ENCODE measurements at regions of chr11 and their contacts with region 1.

Region 1: GRCh38 chr11:6757373-6757967 is 14.3 kb downstream of the OR2AG2 start:
- DNase-seq: peak; percentile 75
- ATAC-seq: peak; percentile 67
- H3K4me3 ChIP-seq: no peak overlapping the region
- H3K4me3 Mint-ChIP-seq: no peak overlapping the region
- H3K27ac ChIP-seq: no peak overlapping the region
- H3K27ac Mint-ChIP-seq: no peak overlapping the region
- H3K4me1 ChIP-seq: no peaks in the 10 kb centered on the region
- H3K4me1 Mint-ChIP-seq: peaks cover 2% of the 10 kb centered on the region
- H3K27me3 ChIP-seq: peaks cover 0 to 5% (median 0%) of the 10 kb centered on the region in 4 experiments
- H3K27me3 Mint-ChIP-seq: peaks cover 9% of the 10 kb centered on the region
- CTCF ChIP-seq: peak; percentile 77

Region 2: GRCh38 chr11:6531267-6531752 is 226.2 kb before region 1 on chr11:
- CTCF ChIA-PET with region 1: interaction called, 22 read pairs
- POLR2A ChIA-PET with region 1: no interaction called
- intact Hi-C with region 1: loop called (anchors 1 kb)
- DNase-seq: peak; percentile 66
- ATAC-seq: peak; percentile 57
- H3K4me3 ChIP-seq: no peak overlapping the region
- H3K4me3 Mint-ChIP-seq: no peak overlapping the region
- H3K27ac ChIP-seq: no peak overlapping the region
- H3K27ac Mint-ChIP-seq: no peak overlapping the region
- H3K4me1 ChIP-seq: peaks cover 4 to 5% of the 10 kb centered on the region in 2 donors
- H3K4me1 Mint-ChIP-seq: peaks cover 5% of the 10 kb centered on the region
- H3K27me3 ChIP-seq: no peaks in the 10 kb centered on the region
- H3K27me3 Mint-ChIP-seq: no peaks in the 10 kb centered on the region
- CTCF ChIP-seq: peak; percentile 83

Region 3: GRCh38 chr11:6663794-6664469 is 93.5 kb before region 1 on chr11:
- CTCF ChIA-PET with region 1: no interaction called
- POLR2A ChIA-PET with region 1: no interaction called
- intact Hi-C with region 1: no loop called
- DNase-seq: no peak
- ATAC-seq: no peak
- H3K4me3 ChIP-seq: no peak overlapping the region
- H3K4me3 Mint-ChIP-seq: no peak overlapping the region
- H3K27ac ChIP-seq: no peak overlapping the region
- H3K27ac Mint-ChIP-seq: no peak overlapping the region
- H3K4me1 ChIP-seq: peaks cover 0 to 5% of the 10 kb centered on the region in 2 donors
- H3K4me1 Mint-ChIP-seq: peaks cover 5% of the 10 kb centered on the region
- H3K27me3 ChIP-seq: no peaks in the 10 kb centered on the region
- H3K27me3 Mint-ChIP-seq: no peaks in the 10 kb centered on the region
- CTCF ChIP-seq: no peak

Region 4: GRCh38 chr11:6719576-6719975 is 37.9 kb before region 1 on chr11:
- CTCF ChIA-PET with region 1: interaction called, 158 read pairs
- POLR2A ChIA-PET with region 1: no interaction called
- intact Hi-C with region 1: no loop called
- DNase-seq: no peak
- ATAC-seq: no peak
- H3K4me3 ChIP-seq: no peak overlapping the region
- H3K4me3 Mint-ChIP-seq: no peak overlapping the region
- H3K27ac ChIP-seq: no peak overlapping the region
- H3K27ac Mint-ChIP-seq: no peak overlapping the region
- H3K4me1 ChIP-seq: peaks cover 9 to 13% of the 10 kb centered on the region in 2 donors
- H3K4me1 Mint-ChIP-seq: peaks cover 46% of the 10 kb centered on the region
- H3K27me3 ChIP-seq: no peaks in the 10 kb centered on the region
- H3K27me3 Mint-ChIP-seq: no peaks in the 10 kb centered on the region
- CTCF ChIP-seq: no peak

Region 5: GRCh38 chr11:6737872-6738466 is 19.5 kb before region 1 on chr11:
- CTCF ChIA-PET with region 1: interaction called, 760 read pairs
- POLR2A ChIA-PET with region 1: interaction called, 3 read pairs
- intact Hi-C with region 1: loop called (anchors 1 kb)
- DNase-seq: peak; percentile 82
- ATAC-seq: peak; percentile 86
- H3K4me3 ChIP-seq: no peak overlapping the region
- H3K4me3 Mint-ChIP-seq: no peak overlapping the region
- H3K27ac ChIP-seq: peak overlapping the region in 1 of 2 donors; percentile 68
- H3K27ac Mint-ChIP-seq: peak overlapping the region; percentile 39
- H3K4me1 ChIP-seq: peaks cover 49 to 60% of the 10 kb centered on the region in 2 donors
- H3K4me1 Mint-ChIP-seq: peaks cover 77% of the 10 kb centered on the region
- H3K27me3 ChIP-seq: no peaks in the 10 kb centered on the region
- H3K27me3 Mint-ChIP-seq: no peaks in the 10 kb centered on the region
- CTCF ChIP-seq: peak; percentile 79

Region 6: DNA sequence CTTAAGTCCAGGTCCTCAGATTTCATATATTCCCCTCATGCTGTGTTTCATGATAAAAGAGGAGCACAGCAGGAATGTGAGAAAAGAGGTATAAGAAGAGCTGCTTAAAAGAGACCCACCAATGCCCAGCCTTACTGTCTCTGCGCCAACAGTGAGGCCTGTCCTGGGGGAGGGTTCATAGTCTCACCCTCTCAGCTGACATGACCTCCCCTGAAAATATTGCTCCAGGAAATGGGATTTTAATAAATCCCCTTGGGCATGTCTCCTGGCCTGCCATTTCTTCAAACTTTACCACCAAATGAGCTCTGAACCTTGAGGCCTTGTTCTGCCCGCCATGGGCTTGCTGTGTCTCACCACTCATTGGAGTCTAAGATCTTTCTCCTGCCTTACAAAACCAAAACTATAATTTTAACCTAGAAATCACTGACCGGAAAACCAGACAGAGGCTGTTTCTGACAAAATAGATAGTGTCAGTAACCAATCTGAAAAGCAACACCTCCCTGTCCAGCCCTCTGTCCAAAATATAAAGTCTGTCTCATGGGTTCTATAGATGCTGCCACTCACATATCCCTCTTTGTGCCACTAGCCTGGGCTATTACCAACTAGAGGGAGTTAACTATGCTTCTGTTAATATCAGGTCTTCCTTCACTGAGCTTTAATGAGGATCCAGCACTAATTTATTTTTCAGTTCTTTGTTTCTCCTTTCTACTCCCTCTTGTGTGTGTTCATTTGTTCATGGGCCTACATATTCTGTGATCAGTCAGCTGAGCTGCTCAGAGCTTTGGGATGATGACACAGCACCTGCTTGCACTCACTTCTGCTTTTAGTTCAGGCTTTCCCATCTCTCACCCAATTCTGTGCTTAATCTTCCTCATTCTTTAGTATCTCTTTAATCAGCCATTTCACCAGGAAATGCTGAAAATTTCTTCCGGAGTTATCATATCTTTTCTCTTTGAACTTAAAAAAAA is 14.7 kb after region 1 on chr11 and contains the start of gene OR2AG2:
- CTCF ChIA-PET with region 1: interaction called, 12 read pairs
- POLR2A ChIA-PET with region 1: no interaction called
- intact Hi-C with region 1: no loop called
- DNase-seq: peak; percentile 65
- ATAC-seq: peak; percentile 86
- H3K4me3 ChIP-seq: no peak within 1 kb of the TSS
- H3K4me3 Mint-ChIP-seq: no peak within 1 kb of the TSS
- H3K27ac ChIP-seq: peak within 1 kb of the TSS; percentile 9 to 53
- H3K27ac Mint-ChIP-seq: peak within 1 kb of the TSS; percentile 68
- H3K4me1 ChIP-seq: peaks cover 7 to 9% of the 10 kb centered on the region in 2 donors
- H3K4me1 Mint-ChIP-seq: peaks cover 9% of the 10 kb centered on the region
- H3K27me3 ChIP-seq: no peaks in the 10 kb centered on the region
- H3K27me3 Mint-ChIP-seq: no peaks in the 10 kb centered on the region
- CTCF ChIP-seq: no peak
- total RNA-seq, gene OR2AG2: 0.27 TPM in 1 of 2 replicates, not detected in the other

Measured in B cell (primary cell).